Heart left ventricle (tissue), 16 donors: ENCODE measurements at regions of chr21 and their contacts with region 1.

Region 1: GRCh38 chr21:43318841-43319781 is 107.8 kb downstream of the SIK1 start:
- DNase-seq: peak; percentile 45 to 76 (median 61)
- ATAC-seq: peak in 2 of 4 donors; percentile 64 to 71
- H3K4me3 ChIP-seq: no peak overlapping the region
- H3K27ac ChIP-seq: peak overlapping the region in 8 of 12 donors; percentile 4 to 74 (median 50)
- H3K4me1 ChIP-seq: peaks cover 0 to 23% (median 1%) of the 10 kb centered on the region in 12 donors
- H3K27me3 ChIP-seq: peaks cover 0 to 2% (median 0%) of the 10 kb centered on the region in 9 donors
- CTCF ChIP-seq: no peak
- POLR2A ChIP-seq: no peak

Region 2: DNA sequence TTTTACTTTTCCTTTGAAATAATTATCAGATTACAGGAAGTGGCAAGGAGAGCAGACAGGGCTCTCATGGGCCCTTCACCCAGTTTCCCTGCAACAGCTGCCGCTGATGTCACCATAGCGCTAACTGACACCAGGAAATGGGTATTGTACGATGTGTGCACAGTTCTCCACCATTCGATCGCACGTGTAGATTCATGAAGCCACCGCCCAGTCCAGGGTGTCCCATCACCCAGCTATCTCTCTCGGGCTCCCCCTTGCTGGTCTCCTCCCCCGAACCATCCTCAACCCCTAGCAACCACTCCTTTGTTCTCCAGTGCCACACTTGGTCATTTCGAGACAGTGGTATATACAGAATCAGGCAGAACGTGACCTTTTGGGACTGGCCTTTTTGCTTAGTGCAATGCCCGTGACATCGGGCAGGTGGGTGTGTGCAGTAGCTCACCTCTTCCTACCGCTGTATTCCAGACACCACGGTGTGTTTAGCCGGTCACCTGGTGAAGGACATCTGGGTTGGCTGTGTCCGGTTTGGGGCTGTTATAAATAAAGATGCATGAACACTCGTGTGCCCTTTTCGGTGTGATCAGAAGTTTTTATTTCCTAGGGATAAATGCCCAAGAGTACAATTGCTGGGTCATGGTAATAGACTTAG is 31.9 kb before region 1 on chr21:
- intact Hi-C with region 1: loop called in 1 of 10 experiments (anchors 5 kb)
- DNase-seq: peak in 3 of 5 donors; percentile 5 to 11 (median 7)
- ATAC-seq: no peak
- H3K4me3 ChIP-seq: no peak overlapping the region
- H3K27ac ChIP-seq: no peak overlapping the region
- H3K4me1 ChIP-seq: no peaks in the 10 kb centered on the region
- H3K27me3 ChIP-seq: no peaks in the 10 kb centered on the region
- CTCF ChIP-seq: no peak
- POLR2A ChIP-seq: no peak

Region 3: GRCh38 chr21:43297391-43297981 is 21.6 kb before region 1 on chr21:
- intact Hi-C with region 1: loop called in 1 of 10 experiments (anchors 2 kb)
- DNase-seq: peak in 3 of 5 donors; percentile 17 to 59 (median 22)
- ATAC-seq: no peak
- H3K4me3 ChIP-seq: no peak overlapping the region
- H3K27ac ChIP-seq: no peak overlapping the region
- H3K4me1 ChIP-seq: peaks cover 0 to 21% (median 0%) of the 10 kb centered on the region in 12 donors
- H3K27me3 ChIP-seq: no peaks in the 10 kb centered on the region
- CTCF ChIP-seq: no peak
- POLR2A ChIP-seq: no peak

Region 4: GRCh38 chr21:43370091-43370658 is 51.1 kb after region 1 on chr21:
- intact Hi-C with region 1: loop called in 1 of 10 experiments (anchors 10 kb)
- DNase-seq: no peak
- ATAC-seq: no peak
- H3K4me3 ChIP-seq: no peak overlapping the region
- H3K27ac ChIP-seq: no peak overlapping the region
- H3K4me1 ChIP-seq: peaks cover 0 to 11% (median 5%) of the 10 kb centered on the region in 12 donors
- H3K27me3 ChIP-seq: no peaks in the 10 kb centered on the region
- CTCF ChIP-seq: no peak
- POLR2A ChIP-seq: no peak

Region 5: DNA sequence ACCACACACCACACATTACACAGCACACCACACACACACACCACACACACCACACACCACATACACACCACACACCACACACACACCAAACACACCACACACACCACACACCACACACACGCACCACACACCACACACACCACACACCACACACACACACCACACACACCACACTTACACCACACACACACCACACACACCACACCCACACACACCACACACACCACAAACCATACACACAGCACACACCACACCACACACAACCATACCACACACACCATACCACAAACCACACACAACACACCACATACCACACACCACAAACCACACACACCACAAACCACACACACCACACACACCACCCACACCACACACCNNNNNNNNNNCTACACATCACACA is 148.7 kb after region 1 on chr21:
- intact Hi-C with region 1: no loop called
- DNase-seq: peak in 2 of 5 donors; percentile 1 to 5
- ATAC-seq: no peak
- H3K4me3 ChIP-seq: no peak overlapping the region
- H3K27ac ChIP-seq: no peak overlapping the region
- H3K4me1 ChIP-seq: no peaks in the 10 kb centered on the region
- H3K27me3 ChIP-seq: no peaks in the 10 kb centered on the region
- CTCF ChIP-seq: no peak
- POLR2A ChIP-seq: no peak

Region 6: GRCh38 chr21:43600642-43601402 is 281.7 kb after region 1 on chr21:
- intact Hi-C with region 1: no loop called
- DNase-seq: no peak
- ATAC-seq: no peak
- H3K4me3 ChIP-seq: no peak overlapping the region
- H3K27ac ChIP-seq: no peak overlapping the region
- H3K4me1 ChIP-seq: peaks cover 0 to 18% (median 0%) of the 10 kb centered on the region in 12 donors
- H3K27me3 ChIP-seq: no peaks in the 10 kb centered on the region
- CTCF ChIP-seq: no peak
- POLR2A ChIP-seq: no peak

Region 7: DNA sequence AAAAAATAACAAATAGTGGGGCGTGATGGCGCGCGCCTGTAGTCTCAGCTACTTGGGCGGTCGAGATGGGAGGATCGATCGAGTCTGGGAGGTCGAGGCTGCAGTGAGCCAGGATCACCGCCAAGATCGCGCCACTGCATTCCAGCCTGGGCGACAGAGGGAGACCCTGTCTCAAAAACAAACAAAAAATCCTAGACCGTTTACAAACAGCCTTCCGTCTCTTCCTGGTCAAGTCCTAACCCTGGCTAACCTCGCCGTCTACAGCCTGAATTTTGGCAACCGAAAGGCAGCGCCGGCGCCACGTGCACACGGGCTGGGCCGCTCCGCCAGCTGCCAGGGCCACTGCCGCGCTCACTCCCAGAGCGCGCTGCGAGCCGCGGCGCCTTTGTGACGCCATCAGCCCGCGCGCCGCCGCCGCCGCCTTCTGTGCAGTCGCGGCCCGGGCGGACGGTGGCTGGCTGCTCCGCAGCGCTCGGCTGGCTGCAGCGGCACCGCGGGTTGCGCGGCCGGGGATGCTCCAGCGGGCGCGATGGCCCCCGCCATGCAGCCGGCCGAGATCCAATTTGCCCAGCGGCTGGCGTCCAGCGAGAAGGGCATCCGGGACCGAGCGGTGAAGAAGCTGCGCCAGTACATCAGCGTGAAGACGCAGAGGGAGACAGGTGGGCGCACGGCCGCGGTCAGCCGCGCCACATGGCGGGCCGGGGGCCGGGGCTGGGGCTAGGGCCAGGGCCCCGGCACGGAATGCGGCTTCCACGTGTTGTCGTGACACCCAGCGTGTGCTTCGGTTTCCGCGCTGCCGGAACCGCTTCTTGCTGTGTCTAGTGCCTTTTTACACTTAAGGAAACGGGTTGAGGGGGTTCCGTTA is 340.3 kb after region 1 on chr21 and contains the starts of genes HSF2BP and RRP1B:
- intact Hi-C with region 1: loop called in 1 of 10 experiments (anchors 10 kb)
- DNase-seq: peak; percentile 82 to 91 (median 87)
- ATAC-seq: peak; percentile 72 to 97 (median 92)
- H3K4me3 ChIP-seq: peak within 1 kb of the TSS; percentile 69 to 100 (median 93)
- H3K27ac ChIP-seq: peak within 1 kb of the TSS; percentile 28 to 92 (median 84)
- H3K4me1 ChIP-seq: peaks cover 0 to 33% (median 21%) of the 10 kb centered on the region in 12 donors
- H3K27me3 ChIP-seq: no peaks in the 10 kb centered on the region
- CTCF ChIP-seq: peak in 4 of 12 donors; percentile 4 to 24 (median 10)
- POLR2A ChIP-seq: peak in 1 of 2 donors; percentile 77
- total RNA-seq, gene HSF2BP: 0.32 TPM in 1 of 9 donors, not detected in the others
- total RNA-seq, gene RRP1B: 6.6 to 16.1 (median 9.5) TPM

Region 8: DNA sequence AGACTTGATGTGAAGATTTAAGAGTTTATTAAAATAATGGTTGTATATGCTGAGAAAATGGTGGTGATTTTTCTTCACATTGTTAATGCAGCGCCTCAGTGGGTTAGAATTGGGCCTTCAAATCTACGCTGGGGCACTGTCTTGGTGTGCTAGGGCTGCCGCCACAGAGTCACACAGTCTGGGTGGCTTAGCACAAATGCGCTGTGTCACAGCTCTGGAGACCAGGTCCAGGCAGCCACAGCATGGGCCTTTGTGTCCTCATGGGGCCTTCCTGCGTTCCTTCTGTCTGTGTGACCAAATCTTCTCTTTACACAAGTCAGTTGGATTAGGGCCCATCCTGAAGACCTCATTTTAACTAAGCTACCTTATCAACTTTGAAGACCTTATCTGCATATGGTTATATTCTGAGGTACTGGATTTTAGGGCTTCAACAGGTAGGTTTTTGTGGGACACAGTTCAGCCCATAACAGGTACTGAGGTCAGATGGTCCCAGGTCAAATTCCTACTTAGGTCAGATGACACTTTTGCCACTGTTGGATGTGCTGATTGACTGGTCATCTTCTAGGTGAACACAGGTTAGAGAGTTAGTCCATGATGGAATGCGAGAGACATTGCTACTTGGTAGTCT is 710.5 kb after region 1 on chr21:
- intact Hi-C with region 1: no loop called
- DNase-seq: no peak
- ATAC-seq: no peak
- H3K4me3 ChIP-seq: no peak overlapping the region
- H3K27ac ChIP-seq: no peak overlapping the region
- H3K4me1 ChIP-seq: peaks cover 0 to 32% (median 20%) of the 10 kb centered on the region in 12 donors
- H3K27me3 ChIP-seq: no peaks in the 10 kb centered on the region
- CTCF ChIP-seq: no peak
- POLR2A ChIP-seq: no peak

Region 9: DNA sequence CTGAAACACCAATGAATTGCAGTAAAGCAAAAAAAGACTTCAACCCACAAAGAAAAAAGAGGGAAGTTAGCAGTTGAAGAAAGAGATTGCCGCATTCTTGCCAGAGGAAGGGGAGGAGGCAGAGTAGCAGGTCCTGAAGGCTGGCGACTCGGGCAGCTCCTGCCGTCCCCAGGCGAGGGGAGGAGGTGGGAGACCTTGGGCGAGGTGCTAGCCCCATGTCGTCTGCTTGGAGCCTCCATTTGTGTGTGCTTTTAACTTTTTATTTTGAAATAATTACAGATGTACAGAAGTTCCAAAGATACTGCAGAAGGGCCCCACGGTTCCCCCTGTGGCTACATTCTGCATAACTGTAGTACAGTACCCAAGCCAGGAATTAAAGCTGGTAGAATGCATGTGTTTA is 1041.0 kb after region 1 on chr21:
- intact Hi-C with region 1: no loop called
- DNase-seq: peak in 1 of 5 donors; percentile 66
- ATAC-seq: no peak
- H3K4me3 ChIP-seq: no peak overlapping the region
- H3K27ac ChIP-seq: peak overlapping the region in 1 of 12 donors; percentile 21
- H3K4me1 ChIP-seq: peaks cover 0 to 33% (median 0%) of the 10 kb centered on the region in 12 donors
- H3K27me3 ChIP-seq: peaks cover 0 to 3% (median 0%) of the 10 kb centered on the region in 9 donors
- CTCF ChIP-seq: no peak
- POLR2A ChIP-seq: no peak